Mammary epithelial cell (primary cell): ENCODE measurements at regions of chr1 and their contacts with region 1.

Region 1: DNA sequence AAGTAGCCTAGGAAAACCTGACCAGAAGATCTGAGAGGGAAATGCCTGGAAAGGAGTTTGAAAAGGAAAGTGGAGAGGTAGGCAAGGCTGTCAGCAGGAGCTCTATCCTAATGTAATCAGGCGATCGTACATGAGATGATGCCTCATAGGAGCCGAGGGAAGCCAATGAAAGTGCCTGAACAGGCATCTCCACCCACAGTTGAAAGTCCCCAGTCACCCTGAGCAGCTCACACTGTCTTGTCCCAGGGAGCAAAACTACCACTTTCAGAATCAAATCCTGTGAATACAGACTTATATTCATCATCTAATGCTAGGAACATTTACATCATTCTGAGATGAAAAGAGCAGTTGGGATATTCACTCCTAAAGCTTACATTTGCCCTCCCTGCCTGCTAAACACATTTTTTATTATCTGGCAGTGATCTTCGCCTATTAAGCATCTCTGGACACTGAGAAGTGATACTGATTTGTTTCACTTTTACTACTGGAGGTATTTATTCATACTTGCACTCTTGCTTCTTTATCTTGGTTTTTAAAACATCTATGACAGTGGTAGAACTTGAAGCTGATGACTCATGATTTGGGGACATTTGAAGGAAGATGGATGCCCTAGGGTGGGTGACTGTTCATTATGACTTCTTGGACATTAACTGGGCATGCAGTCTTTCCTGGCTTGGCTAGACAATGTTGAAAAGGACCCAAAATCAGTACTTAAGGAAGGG is 221.6 kb downstream of the SEC16B start:
- DNase-seq: no peak
- H3K4me3 ChIP-seq: no peak overlapping the region
- H3K27ac ChIP-seq: no peak overlapping the region
- H3K4me1 ChIP-seq: no peaks in the 10 kb centered on the region
- H3K27me3 ChIP-seq: no peaks in the 10 kb centered on the region
- CTCF ChIP-seq: no peak

Region 2: GRCh38 chr1:177669161-177669560 is 79.1 kb before region 1 on chr1:
- CTCF ChIA-PET with region 1: no interaction called
- dilution Hi-C with region 1: loop called (anchors 5 kb)
- in situ Hi-C with region 1: no loop called
- intact Hi-C with region 1: no loop called
- DNase-seq: no peak
- H3K4me3 ChIP-seq: no peak overlapping the region
- H3K27ac ChIP-seq: no peak overlapping the region
- H3K4me1 ChIP-seq: no peaks in the 10 kb centered on the region
- H3K27me3 ChIP-seq: no peaks in the 10 kb centered on the region
- CTCF ChIP-seq: no peak

Region 3: GRCh38 chr1:177945943-177946650 is 197.9 kb after region 1 on chr1:
- CTCF ChIA-PET with region 1: no interaction called
- dilution Hi-C with region 1: no loop called
- in situ Hi-C with region 1: no loop called
- intact Hi-C with region 1: no loop called
- DNase-seq: peak; percentile 72
- H3K4me3 ChIP-seq: no peak overlapping the region
- H3K27ac ChIP-seq: no peak overlapping the region
- H3K4me1 ChIP-seq: peaks cover 9% of the 10 kb centered on the region
- H3K27me3 ChIP-seq: no peaks in the 10 kb centered on the region
- CTCF ChIP-seq: peak; percentile 83 to 94

Region 4: DNA sequence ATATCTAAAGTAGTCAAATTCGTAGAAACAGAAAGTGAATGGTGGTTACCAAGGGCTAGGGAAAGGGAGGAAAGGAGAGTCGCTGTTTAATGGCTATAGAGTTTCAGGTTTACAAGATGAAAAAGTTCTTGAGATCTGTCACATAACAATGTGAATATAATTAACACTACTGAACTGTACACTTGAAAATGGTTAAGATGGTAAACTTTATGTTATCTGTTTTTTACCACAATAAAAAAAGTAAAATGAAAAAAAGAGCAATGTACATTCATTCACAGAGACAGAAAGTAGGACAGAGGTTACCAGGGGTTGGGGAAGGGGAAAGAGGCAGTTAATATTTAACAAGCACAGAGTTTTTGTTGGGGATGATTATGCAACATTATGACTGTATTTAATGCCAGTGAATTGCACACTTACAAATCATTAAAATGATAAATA is 275.0 kb after region 1 on chr1:
- CTCF ChIA-PET with region 1: no interaction called
- dilution Hi-C with region 1: no loop called
- in situ Hi-C with region 1: no loop called
- intact Hi-C with region 1: no loop called
- DNase-seq: no peak
- H3K4me3 ChIP-seq: no peak overlapping the region
- H3K27ac ChIP-seq: no peak overlapping the region
- H3K4me1 ChIP-seq: no peaks in the 10 kb centered on the region
- H3K27me3 ChIP-seq: no peaks in the 10 kb centered on the region
- CTCF ChIP-seq: no peak